Uterus (tissue), 4 donors: ENCODE measurements at regions of chr4 and their contacts with region 1.

Region 1: GRCh38 chr4:165331359-165331758 is 3.9 kb downstream of the MSMO1 start:
- DNase-seq: no peak
- H3K4me3 ChIP-seq: no peak overlapping the region
- H3K27ac ChIP-seq: no peak overlapping the region
- H3K4me1 ChIP-seq: no peaks in the 10 kb centered on the region
- H3K27me3 ChIP-seq: no peaks in the 10 kb centered on the region
- CTCF ChIP-seq: no peak
- POLR2A ChIP-seq: no peak

Region 2: GRCh38 chr4:165207431-165208220 is 123.7 kb before region 1 on chr4 and contains the start of gene KLHL2:
- intact Hi-C with region 1: loop called (anchors 10 kb)
- DNase-seq: peak; percentile 70 to 71
- H3K4me3 ChIP-seq: peak within 1 kb of the TSS; percentile 52 to 86
- H3K27ac ChIP-seq: peak within 1 kb of the TSS; percentile 83 to 87
- H3K4me1 ChIP-seq: peaks cover 0 to 4% of the 10 kb centered on the region in 2 donors
- H3K27me3 ChIP-seq: no peaks in the 10 kb centered on the region
- CTCF ChIP-seq: peak in 2 of 4 experiments; percentile 4 to 22
- POLR2A ChIP-seq: peak; percentile 56 to 77
- total RNA-seq, gene KLHL2: 6.1 to 68.2 (median 26.2) TPM